ENCODE measurements at regions of chrX and their contacts with region 1.

Region 1: DNA sequence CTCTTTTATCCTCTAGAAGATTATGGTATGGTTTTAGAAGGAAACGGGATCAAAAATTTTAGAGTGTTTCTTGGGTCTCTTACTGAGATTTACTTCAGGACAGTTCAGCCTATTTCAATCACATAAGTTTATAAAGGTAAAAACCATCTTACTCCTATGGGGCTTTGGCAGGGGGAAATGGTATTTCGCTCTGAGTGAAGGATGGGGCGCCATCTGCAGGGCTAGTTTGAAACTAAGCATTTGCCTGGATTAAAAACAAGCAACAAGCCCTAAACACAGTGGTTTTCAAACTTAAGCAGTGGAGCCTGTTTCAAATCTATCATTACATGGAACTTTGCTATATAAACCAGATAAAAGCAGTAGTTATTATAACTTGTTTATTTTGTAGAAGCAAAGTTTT is 361.5 kb upstream of the FMR1 start:
- DNase-seq: no peak
- ATAC-seq: no peak
- H3K4me3 ChIP-seq: no peak overlapping the region
- H3K27ac ChIP-seq: no peak overlapping the region
- H3K4me1 ChIP-seq: no peaks in the 10 kb centered on the region
- H3K27me3 ChIP-seq: no peaks in the 10 kb centered on the region
- CTCF ChIP-seq: peak in 6 of 9 donors; percentile 13 to 36 (median 18)

Region 2: DNA sequence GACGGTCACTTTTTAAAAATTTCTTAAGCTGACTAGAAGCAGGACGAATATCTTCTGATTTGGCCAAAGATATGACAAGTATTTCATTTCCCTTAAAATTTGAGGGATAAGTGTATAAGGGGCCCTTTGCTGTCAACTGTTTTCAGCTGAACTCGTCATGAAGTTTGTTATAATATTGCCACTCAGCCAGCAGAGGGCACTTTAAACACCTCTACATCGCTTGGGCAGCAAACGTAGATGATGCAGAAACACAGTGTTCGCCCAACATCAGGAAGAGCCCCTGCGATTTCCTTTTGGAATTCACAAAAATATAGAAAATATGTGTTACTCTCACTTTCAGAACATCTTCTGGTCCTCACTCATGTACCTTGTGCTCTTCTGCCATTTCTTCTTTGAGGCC is 74.2 kb before region 1 on chrX:
- intact Hi-C with region 1: loop called in 2 of 10 experiments (anchors 5 to 10 kb)
- DNase-seq: peak in 1 of 2 donors; percentile 2
- ATAC-seq: no peak
- H3K4me3 ChIP-seq: no peak overlapping the region
- H3K27ac ChIP-seq: no peak overlapping the region
- H3K4me1 ChIP-seq: no peaks in the 10 kb centered on the region
- H3K27me3 ChIP-seq: no peaks in the 10 kb centered on the region
- CTCF ChIP-seq: peak in 4 of 9 donors; percentile 12 to 32 (median 20)

Region 3: GRCh38 chrX:147763131-147763530 is 212.9 kb after region 1 on chrX:
- intact Hi-C with region 1: no loop called
- DNase-seq: no peak
- ATAC-seq: no peak
- H3K4me3 ChIP-seq: no peak overlapping the region
- H3K27ac ChIP-seq: no peak overlapping the region
- H3K4me1 ChIP-seq: no peaks in the 10 kb centered on the region
- H3K27me3 ChIP-seq: no peaks in the 10 kb centered on the region
- CTCF ChIP-seq: no peak